Thyroid gland (tissue), 4 donors: ENCODE measurements at regions of chr1 and their contacts with region 1.

Region 1: GRCh38 chr1:95233737-95234500 is at the start of gene RWDD3:
- DNase-seq: peak; percentile 95 to 96
- H3K4me3 ChIP-seq: peak within 1 kb of the TSS; percentile 35 to 76 (median 64)
- H3K27ac ChIP-seq: peak within 1 kb of the TSS; percentile 66 to 92 (median 76)
- H3K4me1 ChIP-seq: peaks cover 22 to 24% of the 10 kb centered on the region in 2 donors
- H3K27me3 ChIP-seq: no peaks in the 10 kb centered on the region
- CTCF ChIP-seq: peak; percentile 29 to 98 (median 92)
- POLR2A ChIP-seq: peak in 1 of 2 donors; percentile 79
- total RNA-seq, gene RWDD3: 13.1 to 20.6 (median 16.5) TPM

Region 2: DNA sequence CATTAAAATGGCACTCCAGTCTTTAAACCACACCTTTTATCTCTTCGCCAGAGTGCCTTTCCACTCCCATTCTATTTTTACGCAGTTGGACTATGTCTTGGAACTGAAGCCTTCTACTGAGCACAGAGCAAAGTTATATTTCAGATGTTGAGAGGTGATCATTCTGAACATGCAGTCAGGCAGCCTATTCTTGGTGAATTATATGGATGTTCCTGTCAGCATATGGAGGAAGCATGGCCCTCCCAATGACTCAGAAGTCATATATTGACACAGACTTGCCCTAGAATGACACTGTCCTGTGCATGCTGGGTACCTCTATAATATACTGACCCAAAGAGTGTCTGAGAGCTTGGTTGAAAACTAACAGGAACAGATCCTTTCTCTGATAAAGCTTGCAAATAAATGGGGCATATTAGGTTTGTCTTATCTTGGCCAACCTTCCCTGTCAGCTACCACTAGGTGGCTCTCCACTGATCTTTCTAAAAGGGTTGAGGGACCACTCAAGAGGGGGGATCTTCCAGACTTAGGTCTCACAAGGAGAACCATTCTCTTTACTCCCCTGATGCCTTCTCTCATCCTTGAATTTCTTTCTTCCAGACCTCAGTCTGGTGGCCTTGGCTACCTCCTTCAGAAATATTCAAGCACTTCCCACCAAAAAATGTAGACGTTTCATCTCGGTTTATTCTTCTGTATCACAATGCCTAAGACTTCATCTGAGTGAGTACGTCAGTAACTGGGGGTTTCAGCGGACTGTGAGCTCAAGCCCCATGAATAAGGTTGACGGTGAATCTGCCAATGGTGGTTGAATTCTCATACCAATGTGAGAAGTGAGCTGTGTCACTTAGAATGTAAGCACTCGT is 149.4 kb before region 1 on chr1:
- intact Hi-C with region 1: loop called (anchors 10 kb)
- DNase-seq: peak; percentile 26 to 30
- H3K4me3 ChIP-seq: no peak overlapping the region
- H3K27ac ChIP-seq: no peak overlapping the region
- H3K4me1 ChIP-seq: no peaks in the 10 kb centered on the region
- H3K27me3 ChIP-seq: no peaks in the 10 kb centered on the region
- CTCF ChIP-seq: peak; percentile 17 to 70 (median 63)
- POLR2A ChIP-seq: no peak

Region 3: DNA sequence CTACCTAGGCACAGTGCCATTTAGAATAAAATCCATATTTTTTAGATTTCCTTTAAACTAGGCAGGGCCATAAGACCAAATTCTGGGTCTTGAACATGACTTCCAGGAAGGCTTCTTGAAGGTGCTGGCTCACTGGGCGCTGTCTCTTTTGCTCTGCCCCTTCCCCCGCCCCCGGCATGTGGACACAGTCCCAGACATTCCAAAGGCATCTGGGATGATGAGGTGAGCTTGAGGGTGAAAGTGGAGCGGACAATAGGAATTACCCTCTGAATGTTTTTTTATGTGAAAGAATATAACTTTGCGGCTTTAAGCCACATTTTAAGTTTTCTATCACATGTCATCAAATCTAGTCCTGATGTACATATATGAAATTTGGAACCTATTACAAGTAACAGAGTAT is 29.5 kb after region 1 on chr1:
- intact Hi-C with region 1: no loop called
- DNase-seq: no peak
- H3K4me3 ChIP-seq: no peak overlapping the region
- H3K27ac ChIP-seq: no peak overlapping the region
- H3K4me1 ChIP-seq: no peaks in the 10 kb centered on the region
- H3K27me3 ChIP-seq: no peaks in the 10 kb centered on the region
- CTCF ChIP-seq: no peak
- POLR2A ChIP-seq: no peak